Activated CD8-positive, alpha-beta T cell treated with anti-CD3 and anti-CD28 coated beads, Interleukin-2, amount 10 ng/mL, durations not matched to agents 7 days and 5 days (primary cell): ENCODE measurements at regions of chr14 and their contacts with region 1.

Region 1: DNA sequence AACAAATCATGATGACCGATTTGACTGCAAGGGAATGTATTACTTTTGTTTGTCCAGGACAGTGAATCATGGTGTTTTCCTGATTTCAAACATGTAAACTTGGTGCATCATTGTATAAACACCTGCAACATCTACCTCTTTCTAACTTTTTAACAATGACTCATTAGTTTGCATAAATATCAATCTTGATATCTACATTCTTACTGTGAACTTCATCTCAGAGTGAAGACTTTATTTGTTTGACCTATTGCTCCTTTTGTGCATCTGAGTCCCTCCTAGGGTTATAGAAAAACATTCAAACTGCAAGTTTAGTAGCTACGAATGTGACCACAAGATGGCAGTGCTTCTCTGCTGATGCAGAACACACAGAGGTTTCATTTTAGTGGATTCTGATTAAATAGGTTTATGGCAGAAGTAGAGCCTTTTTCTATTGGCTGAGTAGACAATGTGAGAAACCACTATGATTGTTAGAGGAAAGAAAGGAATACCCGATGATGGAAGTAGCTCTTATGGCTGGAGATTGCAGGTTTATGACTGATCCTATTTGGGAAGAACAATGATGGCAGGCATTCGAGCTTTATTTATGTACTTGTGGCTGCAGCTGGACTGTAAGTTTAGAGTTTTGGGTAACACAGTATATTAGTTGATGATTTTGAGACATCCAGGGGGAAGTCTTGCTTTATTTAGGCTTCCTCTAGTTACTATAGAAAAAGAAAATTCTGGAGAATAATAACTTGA is 244.2 kb upstream of the OR4E1 start:
- DNase-seq: peak; percentile 84
- ATAC-seq: peak; percentile 65
- H3K4me3 Mint-ChIP-seq: peak overlapping the region; percentile 78
- H3K27ac Mint-ChIP-seq: peak overlapping the region; percentile 81
- H3K4me1 Mint-ChIP-seq: peaks cover 73% of the 10 kb centered on the region
- H3K27me3 Mint-ChIP-seq: no peaks in the 10 kb centered on the region

Region 2: GRCh38 chr14:21860172-21860571 is 57.7 kb before region 1 on chr14:
- CTCF ChIA-PET with region 1: interaction called, 26 read pairs
- POLR2A ChIA-PET with region 1: no interaction called
- DNase-seq: peak; percentile 65
- ATAC-seq: peak; percentile 44
- H3K4me3 Mint-ChIP-seq: peak overlapping the region; percentile 48
- H3K27ac Mint-ChIP-seq: peak overlapping the region; percentile 43
- H3K4me1 Mint-ChIP-seq: peaks cover 4% of the 10 kb centered on the region
- H3K27me3 Mint-ChIP-seq: peaks cover 18% of the 10 kb centered on the region

Region 3: GRCh38 chr14:21902650-21903103 is 15.2 kb before region 1 on chr14:
- CTCF ChIA-PET with region 1: interaction called, 77 read pairs
- POLR2A ChIA-PET with region 1: interaction called, 5 read pairs
- DNase-seq: peak; percentile 70
- ATAC-seq: peak; percentile 88
- H3K4me3 Mint-ChIP-seq: peak overlapping the region; percentile 77
- H3K27ac Mint-ChIP-seq: peak overlapping the region; percentile 72
- H3K4me1 Mint-ChIP-seq: peaks cover 13% of the 10 kb centered on the region
- H3K27me3 Mint-ChIP-seq: no peaks in the 10 kb centered on the region

Region 4: DNA sequence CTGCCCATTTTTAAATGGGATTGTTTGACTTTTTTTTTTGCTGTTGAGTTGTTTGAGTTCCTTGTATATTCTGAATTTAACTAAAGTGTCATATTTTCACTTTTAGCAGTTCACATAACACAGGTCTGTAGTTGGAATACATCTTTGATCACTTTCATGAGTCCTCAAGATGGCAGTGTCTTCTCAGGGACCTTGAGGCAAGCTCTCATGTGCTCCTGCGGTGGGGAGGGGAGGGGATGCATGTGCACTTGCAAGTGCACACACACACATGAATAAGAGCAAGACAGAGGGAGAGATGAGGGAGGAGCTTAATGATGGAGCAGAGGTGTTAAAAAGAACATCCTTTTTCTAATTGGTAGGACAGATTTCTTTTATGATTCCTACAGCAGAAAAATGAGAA is 47.2 kb after region 1 on chr14:
- CTCF ChIA-PET with region 1: interaction called, 10 read pairs
- POLR2A ChIA-PET with region 1: no interaction called
- DNase-seq: peak; percentile 70
- ATAC-seq: peak; percentile 92
- H3K4me3 Mint-ChIP-seq: peak overlapping the region; percentile 13
- H3K27ac Mint-ChIP-seq: peak overlapping the region; percentile 8
- H3K4me1 Mint-ChIP-seq: peaks cover 31% of the 10 kb centered on the region
- H3K27me3 Mint-ChIP-seq: peaks cover 6% of the 10 kb centered on the region

Region 5: GRCh38 chr14:21997300-21997699 is 79.4 kb after region 1 on chr14:
- CTCF ChIA-PET with region 1: interaction called, 30 read pairs
- POLR2A ChIA-PET with region 1: interaction called, 3 read pairs
- DNase-seq: peak; percentile 63
- ATAC-seq: peak; percentile 91
- H3K4me3 Mint-ChIP-seq: peak overlapping the region; percentile 87
- H3K27ac Mint-ChIP-seq: peak overlapping the region; percentile 93
- H3K4me1 Mint-ChIP-seq: peaks cover 41% of the 10 kb centered on the region
- H3K27me3 Mint-ChIP-seq: peaks cover 3% of the 10 kb centered on the region

Region 6: DNA sequence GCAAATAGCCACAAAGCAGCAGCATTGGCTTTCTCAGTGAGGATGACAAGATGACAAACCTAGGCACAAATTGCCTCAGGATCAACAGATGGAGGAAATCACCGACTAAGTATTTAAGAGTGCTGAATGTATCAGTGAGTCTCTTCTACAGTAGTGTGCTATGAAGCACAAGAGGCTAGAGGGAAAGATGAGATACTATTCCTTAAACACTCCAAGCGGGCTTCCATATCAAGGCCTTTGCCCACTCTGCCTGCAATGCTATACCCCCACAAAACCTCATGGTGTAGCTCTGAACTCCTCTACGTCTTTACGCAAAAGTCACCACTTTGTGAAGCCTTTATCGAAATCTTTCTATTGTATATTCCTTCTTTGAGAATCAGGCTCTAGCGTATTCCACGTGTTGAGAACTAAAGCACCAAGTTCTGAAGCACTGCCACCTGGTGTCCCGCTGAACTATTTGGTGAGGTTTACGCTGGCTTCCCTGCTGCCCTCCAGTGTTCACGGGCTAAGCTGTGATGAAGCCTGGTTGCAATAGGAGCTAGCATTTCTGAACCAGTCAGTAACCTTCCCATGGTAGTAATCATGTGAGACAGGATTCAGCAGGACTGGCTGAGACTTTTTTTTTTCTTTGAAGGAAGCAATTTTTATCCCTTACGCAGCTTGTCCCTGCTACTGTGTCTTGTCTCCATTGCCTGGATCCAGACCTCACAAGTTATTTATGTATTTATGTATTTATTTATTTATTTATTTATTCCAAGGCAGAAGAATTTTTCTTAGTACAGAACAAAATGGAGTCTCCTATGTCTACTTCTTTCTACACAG is 182.3 kb after region 1 on chr14:
- CTCF ChIA-PET with region 1: interaction called, 14 read pairs
- POLR2A ChIA-PET with region 1: no interaction called
- DNase-seq: peak; percentile 78
- ATAC-seq: peak; percentile 55
- H3K4me3 Mint-ChIP-seq: no peak overlapping the region
- H3K27ac Mint-ChIP-seq: peak overlapping the region; percentile 44
- H3K4me1 Mint-ChIP-seq: peaks cover 59% of the 10 kb centered on the region
- H3K27me3 Mint-ChIP-seq: no peaks in the 10 kb centered on the region